ENCODE measurements at regions of chr9 and their contacts with region 1.

Region 1: DNA sequence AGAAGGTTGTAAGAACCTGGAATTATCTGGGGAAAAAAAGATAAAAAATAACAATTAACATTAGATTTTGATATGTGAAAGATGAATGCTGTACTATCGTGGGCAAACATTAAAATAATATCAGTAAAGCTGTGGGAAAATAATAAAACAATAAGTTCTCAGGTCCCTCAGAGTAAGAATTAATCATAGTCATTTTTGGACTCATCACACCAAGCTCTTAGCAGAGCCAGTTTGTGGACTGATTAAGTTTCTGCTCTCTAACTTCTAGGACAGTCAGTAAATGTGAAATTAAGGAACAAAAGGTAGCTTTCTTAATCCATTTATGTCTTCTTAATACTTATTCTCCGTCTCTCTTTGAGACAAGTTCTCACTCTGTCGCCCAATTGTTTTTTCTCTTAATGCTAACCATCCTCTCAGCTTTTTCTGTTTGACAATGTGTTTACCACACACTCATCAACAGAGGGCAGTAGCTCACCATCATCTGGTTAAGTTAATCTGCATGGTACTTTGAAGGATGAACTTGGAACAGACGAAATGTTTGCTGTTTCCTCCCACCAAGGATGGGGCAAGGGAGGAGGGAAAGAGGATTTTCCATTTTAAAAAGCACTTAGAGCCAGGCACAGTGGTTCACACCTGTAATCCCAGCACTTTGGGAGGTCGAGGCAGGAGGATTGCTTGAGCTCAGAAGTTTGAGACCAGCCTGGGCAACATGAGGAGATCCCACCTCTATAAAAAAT is 5.3 kb upstream of the ACO1 start:
- DNase-seq: peak; percentile 63
- H3K4me3 ChIP-seq: no peak overlapping the region; the same call in 1 of the 2 replicates
- H3K27ac ChIP-seq: no peak overlapping the region
- H3K27me3 ChIP-seq: no peaks in the 10 kb centered on the region
- CTCF ChIP-seq: peak; percentile 88

Region 2: GRCh38 chr9:32426278-32426939 is 47.2 kb after region 1 on chr9:
- CTCF ChIA-PET with region 1: interaction called, 133 read pairs
- POLR2A ChIA-PET with region 1: interaction called, 6 read pairs
- DNase-seq: peak; percentile 95
- H3K4me3 ChIP-seq: no peak overlapping the region
- H3K27ac ChIP-seq: peak overlapping the region; percentile 94
- H3K27me3 ChIP-seq: no peaks in the 10 kb centered on the region
- CTCF ChIP-seq: no peak

Region 3: GRCh38 chr9:32456564-32456963 is 77.4 kb after region 1 on chr9:
- CTCF ChIA-PET with region 1: interaction called, 13 read pairs
- POLR2A ChIA-PET with region 1: no interaction called
- DNase-seq: no peak
- H3K4me3 ChIP-seq: no peak overlapping the region
- H3K27ac ChIP-seq: no peak overlapping the region
- H3K27me3 ChIP-seq: no peaks in the 10 kb centered on the region
- CTCF ChIP-seq: no peak

Region 4: DNA sequence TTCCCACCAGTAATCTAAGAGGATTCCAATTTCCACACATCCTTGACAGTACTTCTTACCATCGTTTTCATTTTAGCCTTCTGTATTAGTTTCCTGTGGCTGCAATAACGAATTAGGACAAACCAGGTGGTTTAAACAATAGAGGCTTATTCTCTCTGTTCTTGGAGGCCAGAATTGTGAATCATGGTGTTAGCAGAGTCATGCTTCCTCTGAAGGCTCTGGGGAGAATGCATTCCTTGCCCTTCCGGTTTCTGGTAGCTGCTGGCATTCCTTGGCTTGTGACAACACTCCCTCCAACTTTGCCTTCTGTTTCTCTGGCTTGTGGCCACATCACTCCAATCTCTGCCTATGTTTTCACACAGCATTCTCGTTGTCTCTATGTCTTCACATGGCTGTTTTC is 123.3 kb after region 1 on chr9:
- CTCF ChIA-PET with region 1: interaction called, 11 read pairs
- POLR2A ChIA-PET with region 1: no interaction called
- DNase-seq: no peak
- H3K4me3 ChIP-seq: no peak overlapping the region
- H3K27ac ChIP-seq: no peak overlapping the region
- H3K27me3 ChIP-seq: no peaks in the 10 kb centered on the region
- CTCF ChIP-seq: no peak

Region 5: GRCh38 chr9:32550562-32551433 is 171.6 kb after region 1 on chr9:
- CTCF ChIA-PET with region 1: interaction called, 106 read pairs
- POLR2A ChIA-PET with region 1: interaction called, 3 read pairs
- DNase-seq: peak; percentile 86
- H3K4me3 ChIP-seq: peak overlapping the region; percentile 82
- H3K27ac ChIP-seq: peak overlapping the region; percentile 85
- H3K27me3 ChIP-seq: no peaks in the 10 kb centered on the region
- CTCF ChIP-seq: 0 out of 2 replicates have a peak, but pooled peaks have one; percentile 10

Region 6: GRCh38 chr9:32571969-32572899 is 193.1 kb after region 1 on chr9:
- CTCF ChIA-PET with region 1: interaction called, 1,261 read pairs
- POLR2A ChIA-PET with region 1: interaction called, 8 read pairs
- DNase-seq: no peak
- H3K4me3 ChIP-seq: peak overlapping the region; percentile 96
- H3K27ac ChIP-seq: peak overlapping the region; percentile 62
- H3K27me3 ChIP-seq: no peaks in the 10 kb centered on the region
- CTCF ChIP-seq: peak; percentile 80

Region 7: GRCh38 chr9:32801530-32801929 is 422.4 kb after region 1 on chr9:
- CTCF ChIA-PET with region 1: no interaction called
- POLR2A ChIA-PET with region 1: no interaction called
- DNase-seq: no peak
- H3K4me3 ChIP-seq: no peak overlapping the region
- H3K27ac ChIP-seq: no peak overlapping the region
- H3K27me3 ChIP-seq: no peaks in the 10 kb centered on the region
- CTCF ChIP-seq: no peak

Region 8: DNA sequence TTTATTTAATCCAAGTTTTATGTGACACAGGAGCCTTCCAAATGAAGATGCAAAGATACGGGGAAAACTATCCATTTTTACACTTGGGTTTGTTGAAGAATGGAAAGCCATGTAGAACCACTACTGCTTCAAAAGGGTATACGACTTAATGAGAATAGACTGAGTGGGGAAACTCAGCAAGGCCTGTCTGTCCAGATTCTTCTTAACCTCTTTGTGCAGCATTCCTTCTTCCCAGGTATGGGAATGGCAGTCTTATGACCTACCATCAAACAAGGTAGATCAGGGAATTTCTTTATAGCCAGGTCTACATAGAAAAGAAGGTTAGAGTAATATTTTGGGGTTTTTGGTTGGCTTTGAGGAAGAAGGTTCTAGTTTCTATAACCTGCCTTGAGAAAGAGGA is 598.9 kb after region 1 on chr9:
- CTCF ChIA-PET with region 1: interaction called, 133 read pairs
- POLR2A ChIA-PET with region 1: no interaction called
- DNase-seq: no peak
- H3K4me3 ChIP-seq: no peak overlapping the region
- H3K27ac ChIP-seq: no peak overlapping the region
- H3K27me3 ChIP-seq: no peaks in the 10 kb centered on the region
- CTCF ChIP-seq: no peak

Measured in AG04450 (cell line).